ENCODE measurements at regions of chrX and their contacts with region 1.

Region 1: DNA sequence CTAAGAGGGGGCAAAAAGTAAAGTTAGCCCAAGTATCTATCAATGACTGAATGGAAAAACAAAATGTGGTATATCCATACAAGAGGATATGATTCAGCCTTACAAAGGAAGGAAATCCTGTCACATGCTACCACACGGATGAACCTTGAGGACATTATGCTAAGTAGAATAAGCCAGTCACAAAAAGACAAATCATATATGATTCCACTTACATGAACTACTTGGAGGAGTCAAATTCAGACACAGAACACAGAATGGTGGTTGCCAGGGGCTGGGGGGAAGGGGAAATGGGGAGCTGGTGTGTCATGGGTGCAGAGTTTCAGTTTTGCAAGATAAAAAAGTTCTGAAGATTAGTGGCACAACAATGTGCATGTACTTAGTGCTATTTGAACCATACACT is 101.8 kb downstream of the SH3KBP1 start:
- DNase-seq: no peak
- H3K4me3 Mint-ChIP-seq: no peak overlapping the region
- H3K27ac Mint-ChIP-seq: peak overlapping the region; percentile 79
- H3K4me1 Mint-ChIP-seq: peaks cover 20% of the 10 kb centered on the region
- H3K27me3 Mint-ChIP-seq: no peaks in the 10 kb centered on the region

Region 2: DNA sequence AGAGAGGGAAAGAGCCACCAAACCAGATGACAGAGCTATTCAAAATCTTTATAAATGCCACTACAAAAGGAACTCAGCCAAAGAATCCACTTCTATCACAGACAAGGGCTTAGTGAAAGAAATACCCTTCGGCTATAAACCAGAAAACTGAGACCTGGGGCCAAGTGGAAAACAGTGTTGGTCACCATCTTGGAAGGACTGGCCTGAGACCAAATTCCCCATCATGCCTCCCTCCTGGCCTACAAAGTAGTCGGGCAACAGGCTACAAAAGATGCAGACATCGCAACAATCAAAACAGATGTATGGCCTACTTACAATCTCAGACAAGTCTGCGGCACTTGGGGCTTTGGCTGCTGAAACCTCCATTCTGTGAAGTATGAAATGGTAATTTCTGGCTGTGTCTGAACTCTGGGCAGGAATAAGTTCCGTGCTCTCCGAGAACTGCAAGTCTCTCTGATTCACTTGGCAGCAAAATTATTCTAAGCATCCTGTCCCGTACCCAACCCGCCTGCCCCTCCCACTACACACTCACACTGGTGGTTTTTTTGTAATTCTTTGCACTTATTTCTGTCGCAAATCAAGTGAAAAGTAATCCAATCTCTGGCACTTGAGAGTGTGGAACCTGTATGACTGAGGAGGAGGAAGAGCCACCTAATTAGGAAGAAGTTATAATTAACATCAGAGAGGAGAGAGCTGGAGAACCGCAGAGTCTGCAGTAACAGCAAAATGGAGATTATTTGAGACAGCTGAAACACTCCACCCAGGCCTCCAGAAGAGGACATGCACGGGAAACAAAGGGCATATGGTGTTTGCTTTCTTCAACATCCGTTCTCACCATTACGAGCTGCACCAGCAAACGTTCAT is 13.9 kb after region 1 on chrX:
- intact Hi-C with region 1: loop called (anchors 2 kb)
- DNase-seq: peak; percentile 80
- H3K4me3 Mint-ChIP-seq: peak overlapping the region; percentile 85
- H3K27ac Mint-ChIP-seq: peak overlapping the region; percentile 94
- H3K4me1 Mint-ChIP-seq: peaks cover 60% of the 10 kb centered on the region
- H3K27me3 Mint-ChIP-seq: no peaks in the 10 kb centered on the region